ENCODE measurements at regions of chr12 and their contacts with region 1.

Region 1: GRCh38 chr12:53675651-53676453 is at the start of gene ATP5MC2:
- DNase-seq: peak; percentile 94 to 99 (median 98)

Region 2: DNA sequence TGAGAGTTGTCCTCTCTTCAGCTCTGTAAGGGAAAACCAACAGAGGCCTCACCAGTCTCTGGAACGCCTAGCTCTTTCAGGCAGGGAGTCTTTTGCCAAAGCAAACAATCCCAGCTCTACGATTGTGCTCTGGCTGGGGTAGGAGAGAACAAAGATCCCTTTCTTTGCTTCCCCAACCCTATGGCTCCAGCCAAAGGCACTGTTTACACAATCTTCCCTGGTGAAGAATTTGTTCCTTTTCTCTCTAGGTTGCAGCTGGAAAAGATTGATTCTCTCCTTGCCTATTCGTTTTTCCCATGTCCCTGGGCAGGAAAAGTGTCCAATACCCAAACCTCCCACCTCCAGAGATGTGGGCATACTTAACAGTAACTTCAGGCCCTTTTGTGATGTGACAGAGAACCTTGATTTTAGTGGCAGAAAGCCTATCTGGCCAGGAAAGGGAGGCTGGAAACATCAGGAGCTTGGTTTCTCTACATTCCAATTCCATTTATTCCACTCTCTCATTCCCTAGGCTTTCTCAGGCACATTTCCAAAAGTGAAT is 16.8 kb before region 1 on chr12:
- intact Hi-C with region 1: loop called (anchors 1 kb)
- DNase-seq: peak in 41 of 42 donors; percentile 42 to 94 (median 77)